PC-9 (cell line): ENCODE measurements at regions of chr12 and their contacts with region 1.

Region 1: DNA sequence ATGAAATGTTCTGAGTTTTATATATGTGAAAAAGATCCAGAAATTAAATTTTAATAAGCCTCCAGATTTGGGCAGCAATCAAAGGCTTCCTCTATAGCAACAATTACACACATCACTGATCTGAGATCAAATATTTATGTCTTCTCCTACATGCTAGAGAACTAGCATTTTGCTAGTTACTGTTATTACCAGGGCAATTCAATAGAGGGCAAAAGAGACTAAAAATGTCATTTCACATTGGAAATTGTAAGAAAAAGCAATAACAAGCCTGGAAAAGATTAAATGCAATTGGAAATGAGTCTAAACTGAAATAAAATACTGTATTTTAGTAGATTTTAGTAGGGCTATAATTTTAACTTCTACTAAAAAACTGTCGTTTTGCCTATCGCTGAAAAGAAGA is 32.6 kb upstream of the ANO6 start:
- DNase-seq: no peak
- H3K4me3 ChIP-seq: no peak overlapping the region
- H3K27ac ChIP-seq: no peak overlapping the region
- H3K4me1 ChIP-seq: no peaks in the 10 kb centered on the region; the same call in 1 of the 2 replicates
- H3K27me3 ChIP-seq: no peaks in the 10 kb centered on the region
- CTCF ChIP-seq: peak; percentile 46; the same call in 1 of the 2 replicates

Region 2: GRCh38 chr12:45138609-45139008 is 44.6 kb before region 1 on chr12:
- CTCF ChIA-PET with region 1: no interaction called
- POLR2A ChIA-PET with region 1: no interaction called
- intact Hi-C with region 1: no loop called
- DNase-seq: no peak
- H3K4me3 ChIP-seq: no peak overlapping the region
- H3K27ac ChIP-seq: no peak overlapping the region
- H3K4me1 ChIP-seq: no peaks in the 10 kb centered on the region
- H3K27me3 ChIP-seq: no peaks in the 10 kb centered on the region
- CTCF ChIP-seq: no peak

Region 3: DNA sequence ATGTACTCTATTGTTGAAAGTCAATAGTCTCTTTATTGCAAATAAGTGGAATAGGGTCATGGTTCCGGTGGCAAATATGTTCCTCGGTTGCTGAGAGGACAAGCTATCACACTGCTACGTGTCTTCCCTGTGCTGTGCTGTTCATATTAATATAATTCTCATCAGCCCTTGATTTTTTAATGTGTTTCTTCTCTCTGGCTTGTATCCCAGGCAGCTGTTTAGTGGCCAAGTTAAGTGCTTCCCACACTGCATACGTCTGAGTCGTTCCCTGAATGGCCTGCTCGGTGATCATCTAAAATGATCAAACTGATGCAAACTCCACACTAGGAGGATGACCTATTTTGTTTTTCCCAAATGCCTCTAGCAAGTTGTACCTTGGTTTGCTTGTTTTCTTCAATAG is 219.0 kb after region 1 on chr12:
- CTCF ChIA-PET with region 1: no interaction called
- POLR2A ChIA-PET with region 1: no interaction called
- intact Hi-C with region 1: loop called (anchors 5 kb)
- DNase-seq: no peak
- H3K4me3 ChIP-seq: no peak overlapping the region
- H3K27ac ChIP-seq: no peak overlapping the region
- H3K4me1 ChIP-seq: no peaks in the 10 kb centered on the region
- H3K27me3 ChIP-seq: no peaks in the 10 kb centered on the region
- CTCF ChIP-seq: no peak